ENCODE measurements at regions of chr3 and their contacts with region 1.

Region 1: DNA sequence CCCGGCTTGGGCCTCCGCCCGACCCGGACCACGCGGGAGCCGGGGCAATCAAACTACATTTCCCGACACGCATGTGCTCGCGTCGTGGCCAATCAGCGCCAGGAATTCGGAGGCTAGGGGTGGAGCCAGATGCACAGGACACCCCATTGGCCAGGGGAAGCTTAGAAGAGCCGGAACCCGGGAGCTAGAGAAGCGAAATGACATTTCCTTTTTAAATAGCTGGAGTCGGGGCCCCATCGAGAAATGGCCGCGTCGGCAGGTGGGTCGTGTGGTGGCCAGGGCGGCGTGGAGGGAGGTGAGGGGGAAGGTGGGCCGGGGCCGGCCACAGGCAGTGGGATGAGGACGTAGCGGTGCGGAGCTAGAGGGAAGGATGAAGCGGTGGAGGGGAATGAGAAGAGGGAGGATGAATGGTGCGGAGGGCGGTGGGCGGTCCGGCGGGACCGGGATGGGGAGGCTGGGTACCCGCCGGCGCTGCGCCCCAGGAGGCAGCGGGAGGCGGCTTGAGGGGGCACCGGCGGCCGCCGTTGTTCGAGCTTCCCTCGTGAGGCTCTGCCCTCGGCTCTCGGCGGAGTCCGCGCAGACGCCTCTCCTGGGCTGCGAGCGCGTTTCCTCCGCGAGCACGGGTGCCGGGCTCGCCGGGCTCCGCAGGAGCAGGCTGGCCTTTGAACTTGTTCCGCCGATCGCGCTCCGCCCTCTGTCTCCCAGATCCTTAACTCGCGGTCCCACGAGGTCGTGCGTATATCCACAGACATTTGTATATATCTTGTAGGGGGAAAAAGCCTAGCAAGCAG is at the start of gene KBTBD8:
- DNase-seq: peak; percentile 92 to 99 (median 97)
- ATAC-seq: peak; percentile 94
- H3K4me3 ChIP-seq: peak within 1 kb of the TSS; percentile 62 to 94
- H3K4me3 Mint-ChIP-seq: peak within 1 kb of the TSS; percentile 86
- H3K27ac ChIP-seq: peak within 1 kb of the TSS; percentile 53 to 63
- H3K27ac Mint-ChIP-seq: peak within 1 kb of the TSS; percentile 92
- H3K4me1 ChIP-seq: peaks cover 10% of the 10 kb centered on the region
- H3K4me1 Mint-ChIP-seq: peaks cover 32% of the 10 kb centered on the region
- H3K27me3 ChIP-seq: no peaks in the 10 kb centered on the region
- H3K27me3 Mint-ChIP-seq: peaks cover 14% of the 10 kb centered on the region
- CTCF ChIP-seq: no peak
- total RNA-seq, gene KBTBD8: 9.5 to 12.1 TPM

Region 2: GRCh38 chr3:66220602-66221377 is 777.5 kb before region 1 on chr3 and contains the start of gene SLC25A26:
- CTCF ChIA-PET with region 1: no interaction called
- POLR2A ChIA-PET with region 1: no interaction called
- intact Hi-C with region 1: loop called (anchors 1 kb)
- DNase-seq: peak; percentile 94 to 99 (median 97)
- ATAC-seq: peak; percentile 98
- H3K4me3 ChIP-seq: peak within 1 kb of the TSS; percentile 73 to 91
- H3K4me3 Mint-ChIP-seq: peak within 1 kb of the TSS; percentile 90
- H3K27ac ChIP-seq: peak within 1 kb of the TSS; percentile 58 to 82
- H3K27ac Mint-ChIP-seq: peak within 1 kb of the TSS; percentile 90
- H3K4me1 ChIP-seq: peaks cover 14% of the 10 kb centered on the region
- H3K4me1 Mint-ChIP-seq: peaks cover 35% of the 10 kb centered on the region
- H3K27me3 ChIP-seq: no peaks in the 10 kb centered on the region
- H3K27me3 Mint-ChIP-seq: peaks cover 3% of the 10 kb centered on the region
- CTCF ChIP-seq: no peak
- total RNA-seq, gene SLC25A26: 32.0 to 37.4 TPM

Region 3: GRCh38 chr3:66490214-66490613 is 508.1 kb before region 1 on chr3:
- CTCF ChIA-PET with region 1: no interaction called
- POLR2A ChIA-PET with region 1: no interaction called
- intact Hi-C with region 1: loop called in 1 of 2 experiments (anchors 5 kb)
- DNase-seq: peak in 2 of 9 experiments; percentile 23 to 40
- ATAC-seq: no peak
- H3K4me3 ChIP-seq: no peak overlapping the region
- H3K4me3 Mint-ChIP-seq: peak overlapping the region; percentile 54
- H3K27ac ChIP-seq: no peak overlapping the region
- H3K27ac Mint-ChIP-seq: peak overlapping the region; percentile 85
- H3K4me1 ChIP-seq: peaks cover 21% of the 10 kb centered on the region
- H3K4me1 Mint-ChIP-seq: peaks cover 71% of the 10 kb centered on the region
- H3K27me3 ChIP-seq: no peaks in the 10 kb centered on the region
- H3K27me3 Mint-ChIP-seq: peaks cover 5% of the 10 kb centered on the region
- CTCF ChIP-seq: no peak

Region 4: GRCh38 chr3:66778777-66779176 is 219.5 kb before region 1 on chr3:
- CTCF ChIA-PET with region 1: no interaction called
- POLR2A ChIA-PET with region 1: no interaction called
- intact Hi-C with region 1: no loop called
- DNase-seq: no peak
- ATAC-seq: no peak
- H3K4me3 ChIP-seq: no peak overlapping the region
- H3K4me3 Mint-ChIP-seq: no peak overlapping the region
- H3K27ac ChIP-seq: no peak overlapping the region
- H3K27ac Mint-ChIP-seq: no peak overlapping the region
- H3K4me1 ChIP-seq: no peaks in the 10 kb centered on the region
- H3K4me1 Mint-ChIP-seq: no peaks in the 10 kb centered on the region
- H3K27me3 ChIP-seq: no peaks in the 10 kb centered on the region
- H3K27me3 Mint-ChIP-seq: peaks cover 2% of the 10 kb centered on the region
- CTCF ChIP-seq: no peak

Region 5: GRCh38 chr3:66971891-66972551 is 26.3 kb before region 1 on chr3:
- CTCF ChIA-PET with region 1: interaction called, 9 read pairs
- POLR2A ChIA-PET with region 1: interaction called, 10 read pairs
- intact Hi-C with region 1: loop called in 1 of 2 experiments (anchors 1 kb)
- DNase-seq: peak; percentile 16 to 77 (median 55)
- ATAC-seq: peak; percentile 89
- H3K4me3 ChIP-seq: peak overlapping the region; percentile 46 to 70
- H3K4me3 Mint-ChIP-seq: peak overlapping the region; percentile 87
- H3K27ac ChIP-seq: peak overlapping the region in 1 of 2 experiments; percentile 33
- H3K27ac Mint-ChIP-seq: peak overlapping the region; percentile 77
- H3K4me1 ChIP-seq: peaks cover 8% of the 10 kb centered on the region
- H3K4me1 Mint-ChIP-seq: peaks cover 8% of the 10 kb centered on the region
- H3K27me3 ChIP-seq: no peaks in the 10 kb centered on the region
- H3K27me3 Mint-ChIP-seq: peaks cover 4% of the 10 kb centered on the region
- CTCF ChIP-seq: peak; percentile 89

Region 6: DNA sequence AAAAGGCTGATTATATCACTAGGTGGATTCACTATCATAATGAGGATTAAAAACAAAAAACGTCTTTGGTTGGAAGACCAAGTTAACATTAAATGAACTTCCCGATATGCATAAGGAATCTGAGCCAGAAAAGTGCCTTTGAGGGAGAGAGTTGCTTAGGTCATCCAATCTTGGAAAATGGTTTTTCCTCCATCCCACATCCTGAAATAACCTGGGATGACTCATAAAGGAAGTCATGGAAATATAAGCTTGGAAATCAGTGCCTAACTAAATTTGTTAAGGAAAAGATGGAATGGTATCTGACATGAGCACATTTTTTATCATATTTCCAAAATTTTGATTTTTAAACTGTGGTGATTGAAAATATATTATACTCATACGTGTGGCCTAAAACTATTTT is 65.8 kb after region 1 on chr3:
- CTCF ChIA-PET with region 1: no interaction called
- POLR2A ChIA-PET with region 1: no interaction called
- intact Hi-C with region 1: no loop called
- DNase-seq: no peak
- ATAC-seq: no peak
- H3K4me3 ChIP-seq: no peak overlapping the region
- H3K4me3 Mint-ChIP-seq: no peak overlapping the region
- H3K27ac ChIP-seq: no peak overlapping the region
- H3K27ac Mint-ChIP-seq: no peak overlapping the region
- H3K4me1 ChIP-seq: no peaks in the 10 kb centered on the region
- H3K4me1 Mint-ChIP-seq: no peaks in the 10 kb centered on the region
- H3K27me3 ChIP-seq: no peaks in the 10 kb centered on the region
- H3K27me3 Mint-ChIP-seq: peaks cover 11% of the 10 kb centered on the region
- CTCF ChIP-seq: no peak

Region 7: GRCh38 chr3:67325231-67325630 is 326.9 kb after region 1 on chr3:
- CTCF ChIA-PET with region 1: no interaction called
- POLR2A ChIA-PET with region 1: no interaction called
- intact Hi-C with region 1: no loop called
- DNase-seq: no peak
- ATAC-seq: no peak
- H3K4me3 ChIP-seq: no peak overlapping the region
- H3K4me3 Mint-ChIP-seq: no peak overlapping the region
- H3K27ac ChIP-seq: no peak overlapping the region
- H3K27ac Mint-ChIP-seq: no peak overlapping the region
- H3K4me1 ChIP-seq: no peaks in the 10 kb centered on the region
- H3K4me1 Mint-ChIP-seq: no peaks in the 10 kb centered on the region
- H3K27me3 ChIP-seq: no peaks in the 10 kb centered on the region
- H3K27me3 Mint-ChIP-seq: no peaks in the 10 kb centered on the region
- CTCF ChIP-seq: no peak

Region 8: DNA sequence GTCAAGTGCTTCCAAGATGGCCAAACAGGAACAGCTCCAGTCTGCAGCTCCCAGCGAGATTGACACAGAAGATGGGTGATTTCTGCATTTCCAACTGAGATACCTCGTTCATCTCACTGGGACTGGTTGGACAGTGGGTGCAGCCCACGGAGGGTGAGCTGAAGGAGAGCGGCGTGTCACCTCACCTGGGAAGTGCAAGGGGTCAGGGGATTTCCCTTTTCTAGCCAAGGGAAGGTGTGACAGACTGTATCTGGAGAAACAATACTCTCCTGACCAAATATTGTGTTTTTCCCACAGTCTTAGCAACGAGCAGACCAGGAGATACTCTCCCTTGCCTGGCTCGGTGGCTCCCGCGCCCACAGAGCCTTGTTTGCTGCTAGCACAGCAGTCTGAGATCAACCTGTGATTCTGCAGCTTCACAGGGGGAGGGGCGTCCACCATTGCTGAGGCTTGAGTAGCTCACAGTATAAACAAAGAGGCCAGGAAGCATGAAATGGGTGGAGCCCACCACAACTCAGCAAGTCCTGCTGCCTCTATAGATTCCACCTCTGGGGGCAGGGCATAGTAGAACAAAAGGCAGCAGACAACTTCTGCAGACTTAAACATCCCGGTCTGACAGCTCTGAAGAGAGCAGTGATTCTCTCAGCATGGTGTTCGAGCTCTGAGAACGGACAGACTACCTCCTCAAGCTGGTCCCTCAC is 949.6 kb after region 1 on chr3:
- CTCF ChIA-PET with region 1: no interaction called
- POLR2A ChIA-PET with region 1: no interaction called
- intact Hi-C with region 1: loop called in 1 of 2 experiments (anchors 10 kb)
- DNase-seq: peak; percentile 50 to 89 (median 77)
- ATAC-seq: peak; percentile 95
- H3K4me3 ChIP-seq: peak overlapping the region; percentile 42 to 45
- H3K4me3 Mint-ChIP-seq: peak overlapping the region; percentile 84
- H3K27ac ChIP-seq: peak overlapping the region; percentile 2 to 32
- H3K27ac Mint-ChIP-seq: peak overlapping the region; percentile 92
- H3K4me1 ChIP-seq: peaks cover 20% of the 10 kb centered on the region
- H3K4me1 Mint-ChIP-seq: peaks cover 39% of the 10 kb centered on the region
- H3K27me3 ChIP-seq: no peaks in the 10 kb centered on the region
- H3K27me3 Mint-ChIP-seq: no peaks in the 10 kb centered on the region
- CTCF ChIP-seq: peak; percentile 18